ENCODE measurements at regions of chr4 and their contacts with region 1.

Region 1: DNA sequence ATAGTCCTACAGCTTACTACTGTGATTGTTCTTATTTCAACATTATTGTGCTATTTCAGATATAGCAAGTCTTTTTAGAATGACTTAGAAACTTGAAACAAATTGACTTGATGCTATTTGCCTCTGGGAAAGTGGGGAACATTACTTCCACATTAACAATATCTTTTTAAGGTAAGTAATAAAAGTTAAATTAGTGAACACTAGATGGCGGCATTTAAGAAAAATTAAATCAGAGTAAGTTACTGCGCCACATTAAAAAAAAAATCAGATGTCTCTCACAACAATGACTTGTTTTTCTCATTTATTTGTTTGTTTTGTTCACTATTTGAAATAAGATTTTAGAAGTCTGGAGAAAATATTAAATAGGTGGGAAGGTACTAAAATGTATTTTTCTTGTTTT is 1026.9 kb upstream of the SLIT2 start:
- DNase-seq: no peak

Region 2: GRCh38 chr4:18536428-18536827 is 688.4 kb before region 1 on chr4:
- intact Hi-C with region 1: no loop called
- DNase-seq: no peak

Region 3: GRCh38 chr4:20248155-20248558 is 1023.3 kb after region 1 on chr4:
- intact Hi-C with region 1: loop called (anchors 5 kb)
- DNase-seq: no peak

Measured in cardiac septum (tissue), 1 donor.